Cardiac septum (tissue), 1 donor: ENCODE measurements at regions of chr6 and their contacts with region 1.

Region 1: DNA sequence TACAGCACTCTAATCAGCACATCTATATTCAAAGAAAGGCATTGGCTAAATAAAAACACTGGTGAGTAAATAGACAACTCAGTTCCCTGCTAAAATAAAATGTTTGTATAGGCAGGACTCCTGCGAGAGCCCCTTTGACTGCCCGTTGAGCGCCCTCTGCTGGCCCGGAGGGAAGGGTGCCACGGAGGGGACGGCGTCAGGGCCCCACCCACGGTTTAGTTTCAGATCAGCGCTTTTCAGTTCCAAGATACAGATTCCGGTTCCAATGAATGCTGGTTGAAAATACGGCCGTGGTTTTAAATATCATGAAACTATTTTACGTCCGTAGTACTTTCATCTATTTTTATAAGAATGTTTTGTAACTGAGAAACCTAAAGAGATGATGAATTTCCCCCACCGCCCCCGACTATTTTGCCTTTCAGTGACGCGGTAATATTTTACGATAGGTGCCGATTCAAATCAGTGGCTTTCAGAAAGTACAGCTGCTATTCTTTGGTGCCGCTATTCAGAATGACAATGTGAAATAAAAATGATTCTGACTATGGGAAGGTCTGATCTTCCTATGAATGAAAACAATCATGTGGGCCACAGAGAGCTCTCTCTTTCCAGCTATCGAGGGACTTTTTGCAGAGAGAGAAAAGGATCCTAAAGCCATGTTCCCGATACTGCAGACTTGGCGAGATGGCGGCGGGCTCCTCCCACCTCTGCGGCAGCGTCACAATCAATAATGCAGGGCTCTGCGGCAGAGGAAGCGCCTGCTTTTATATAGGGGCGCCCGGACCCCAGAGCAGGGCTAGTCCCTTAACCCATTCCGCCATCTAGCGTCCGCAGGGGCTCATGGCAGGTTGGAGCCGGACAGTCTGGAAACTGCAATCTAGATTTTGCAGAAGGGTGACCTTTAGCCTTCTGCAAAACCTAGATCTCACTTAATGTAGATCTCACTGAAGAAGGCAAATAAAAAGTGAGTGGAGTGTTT is 10.6 kb upstream of the CCN6 start:
- DNase-seq: peak; percentile 93

Region 2: DNA sequence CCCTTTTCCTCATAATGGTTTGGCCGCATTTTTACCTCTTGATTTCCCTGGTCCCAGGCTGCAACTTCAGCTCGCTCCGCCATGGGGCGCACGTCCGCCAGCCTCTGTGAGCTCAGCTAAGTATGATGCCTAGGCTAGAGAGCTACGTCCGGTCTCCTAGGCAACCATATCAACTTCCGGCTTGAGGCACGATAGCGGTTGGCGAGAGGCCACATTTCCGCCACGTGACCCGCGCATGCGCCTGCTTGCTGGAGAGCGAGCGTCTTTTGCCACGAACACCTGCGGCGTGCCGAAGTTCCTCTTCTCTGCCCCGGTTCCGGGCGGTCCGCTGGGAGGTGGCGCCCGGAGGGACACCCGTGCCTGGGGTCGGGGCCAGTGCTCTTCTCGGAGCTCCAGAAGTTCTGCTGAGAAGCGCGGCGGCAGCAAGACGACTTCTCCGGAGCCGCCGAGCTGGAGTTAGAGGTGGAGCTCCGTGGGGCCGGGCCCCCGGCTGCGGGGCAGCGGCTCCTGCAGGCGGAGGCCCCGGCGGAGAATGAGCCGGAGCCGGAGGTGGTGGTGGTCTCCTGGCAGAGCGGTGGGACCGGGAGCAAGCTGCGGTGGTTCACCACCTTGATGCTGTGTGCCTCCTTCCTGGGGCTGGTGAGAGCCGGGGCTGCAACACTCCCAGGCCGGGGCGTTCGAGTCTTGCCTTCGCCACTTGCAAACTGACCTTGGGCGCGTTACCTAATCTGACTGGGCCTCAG is 784.1 kb before region 1 on chr6:
- intact Hi-C with region 1: loop called (anchors 5 kb)
- DNase-seq: peak; percentile 99

Region 3: GRCh38 chr6:111663692-111664564 is 379.4 kb before region 1 on chr6:
- intact Hi-C with region 1: no loop called
- DNase-seq: no peak

Region 4: DNA sequence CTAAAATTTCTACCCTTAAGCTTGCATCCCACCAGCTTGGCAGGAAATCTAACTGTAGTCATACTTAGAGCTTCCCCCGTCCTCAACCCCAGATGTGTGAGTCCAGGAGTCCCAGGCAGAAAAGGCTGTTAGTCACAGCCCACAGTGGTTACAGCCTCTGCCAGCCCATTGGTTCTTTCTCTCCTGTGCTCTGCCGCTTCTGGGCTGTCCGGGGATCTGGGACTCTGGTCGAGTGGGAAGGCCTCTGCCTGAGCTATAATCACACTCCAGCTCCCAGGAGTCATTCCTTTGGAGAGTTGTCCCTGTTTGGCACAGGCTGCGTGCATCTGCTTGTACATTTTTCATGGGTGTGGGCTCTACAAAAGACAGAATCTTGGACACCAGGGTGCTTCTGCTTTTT is 124.5 kb before region 1 on chr6:
- intact Hi-C with region 1: no loop called
- DNase-seq: no peak

Region 5: GRCh38 chr6:111997078-111997852 is 46.1 kb before region 1 on chr6:
- intact Hi-C with region 1: loop called (anchors 2 kb)
- DNase-seq: peak; percentile 90

Region 6: DNA sequence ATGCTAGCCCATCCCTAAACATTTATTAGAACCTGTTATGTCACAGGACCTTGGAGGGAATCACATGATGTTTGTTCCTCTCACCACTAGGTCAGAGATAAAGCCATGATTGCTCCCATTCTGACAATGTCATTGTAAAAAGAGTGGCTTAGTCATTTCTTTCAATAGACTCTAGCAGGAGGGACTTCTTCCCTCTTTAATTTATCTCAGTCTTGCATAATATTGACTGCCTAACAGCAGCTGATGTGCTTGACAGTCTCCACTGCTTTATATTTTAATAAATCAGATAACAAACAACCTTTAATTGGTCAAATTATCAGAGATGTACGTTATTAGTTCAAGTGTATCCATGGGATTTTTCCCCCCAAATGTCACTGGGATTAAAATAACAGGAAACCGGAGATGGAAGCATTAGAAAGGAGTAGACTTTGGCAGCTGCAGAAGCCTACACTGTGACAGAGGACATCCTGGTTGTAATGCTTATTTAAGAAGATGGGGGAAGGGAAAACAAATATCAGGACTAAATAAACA is 171.5 kb after region 1 on chr6:
- intact Hi-C with region 1: no loop called
- DNase-seq: no peak